IMR-90 (cell line): ENCODE measurements at regions of chr6 and their contacts with region 1.

Region 1: GRCh38 chr6:63571881-63572732 is at the starts of genes LOC128125822 and PTP4A1:
- DNase-seq: peak; percentile 98
- ATAC-seq: peak; percentile 93
- H3K4me3 ChIP-seq: peak within 1 kb of the TSS; percentile 85
- H3K27ac ChIP-seq: peak within 1 kb of the TSS; percentile 99
- H3K4me1 ChIP-seq: no peaks in the 10 kb centered on the region
- H3K27me3 ChIP-seq: no peaks in the 10 kb centered on the region
- CTCF ChIP-seq: 0 out of 2 replicates have a peak, but pooled peaks have one; percentile 22
- POLR2A ChIP-seq: peak; percentile 99
- RAD21 ChIP-seq: no peak
- total RNA-seq, gene PTP4A1: 53.1 and 60.0 TPM in 2 replicates

Region 2: DNA sequence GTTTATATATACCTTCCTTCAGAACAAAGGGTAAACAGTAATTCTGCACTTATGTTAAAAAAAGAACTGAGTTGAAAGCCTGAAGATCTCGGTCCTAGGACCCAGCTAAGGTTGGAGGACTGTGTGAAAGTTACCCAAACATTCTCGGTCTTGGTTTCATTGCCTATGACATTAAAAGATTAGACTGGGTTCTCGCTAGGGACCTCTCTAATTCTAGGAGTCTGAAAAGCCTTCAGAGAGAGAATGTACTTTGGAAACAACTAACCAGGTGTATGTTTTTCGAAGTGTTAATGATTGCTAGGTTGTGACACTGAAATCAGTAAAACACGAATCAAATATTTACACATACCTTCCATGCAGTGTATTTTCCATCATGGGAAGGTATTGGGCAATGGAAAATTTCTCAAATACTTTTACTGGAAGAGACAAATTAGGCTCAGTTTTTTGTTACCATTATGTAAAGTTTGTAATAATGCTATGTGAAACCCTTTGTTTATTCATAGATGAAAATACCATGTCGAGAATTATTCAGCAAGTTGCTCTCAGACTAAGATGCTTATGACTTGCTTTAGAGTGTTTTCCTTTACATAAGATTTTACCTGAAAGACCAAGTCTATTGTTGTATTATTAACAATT is 113.5 kb before region 1 on chr6:
- CTCF ChIA-PET with region 1: no interaction called
- POLR2A ChIA-PET with region 1: no interaction called
- dilution Hi-C with region 1: no loop called
- in situ Hi-C with region 1: no loop called
- intact Hi-C with region 1: loop called (anchors 10 kb)
- DNase-seq: no peak
- ATAC-seq: no peak; the same call in 1 of the 2 replicates
- H3K4me3 ChIP-seq: no peak overlapping the region
- H3K27ac ChIP-seq: no peak overlapping the region
- H3K4me1 ChIP-seq: no peaks in the 10 kb centered on the region
- H3K27me3 ChIP-seq: no peaks in the 10 kb centered on the region
- CTCF ChIP-seq: no peak
- POLR2A ChIP-seq: no peak
- RAD21 ChIP-seq: no peak

Region 3: GRCh38 chr6:63504777-63505384 is 67.2 kb before region 1 on chr6:
- CTCF ChIA-PET with region 1: interaction called, 4 read pairs
- POLR2A ChIA-PET with region 1: no interaction called
- dilution Hi-C with region 1: no loop called
- in situ Hi-C with region 1: no loop called
- intact Hi-C with region 1: loop called (anchors 5 kb)
- DNase-seq: no peak
- ATAC-seq: no peak
- H3K4me3 ChIP-seq: no peak overlapping the region
- H3K27ac ChIP-seq: no peak overlapping the region
- H3K4me1 ChIP-seq: no peaks in the 10 kb centered on the region
- H3K27me3 ChIP-seq: no peaks in the 10 kb centered on the region
- CTCF ChIP-seq: no peak
- POLR2A ChIP-seq: no peak
- RAD21 ChIP-seq: no peak

Region 4: GRCh38 chr6:63527658-63528514 is 44.2 kb before region 1 on chr6:
- CTCF ChIA-PET with region 1: no interaction called
- POLR2A ChIA-PET with region 1: no interaction called
- dilution Hi-C with region 1: no loop called
- in situ Hi-C with region 1: no loop called
- intact Hi-C with region 1: loop called (anchors 5 kb)
- DNase-seq: peak; percentile 100
- ATAC-seq: peak; percentile 95
- H3K4me3 ChIP-seq: no peak overlapping the region
- H3K27ac ChIP-seq: peak overlapping the region; percentile 81; the same call in 1 of the 2 replicates
- H3K4me1 ChIP-seq: peaks cover 10% of the 10 kb centered on the region
- H3K27me3 ChIP-seq: no peaks in the 10 kb centered on the region
- CTCF ChIP-seq: no peak
- POLR2A ChIP-seq: no peak
- RAD21 ChIP-seq: no peak

Region 5: DNA sequence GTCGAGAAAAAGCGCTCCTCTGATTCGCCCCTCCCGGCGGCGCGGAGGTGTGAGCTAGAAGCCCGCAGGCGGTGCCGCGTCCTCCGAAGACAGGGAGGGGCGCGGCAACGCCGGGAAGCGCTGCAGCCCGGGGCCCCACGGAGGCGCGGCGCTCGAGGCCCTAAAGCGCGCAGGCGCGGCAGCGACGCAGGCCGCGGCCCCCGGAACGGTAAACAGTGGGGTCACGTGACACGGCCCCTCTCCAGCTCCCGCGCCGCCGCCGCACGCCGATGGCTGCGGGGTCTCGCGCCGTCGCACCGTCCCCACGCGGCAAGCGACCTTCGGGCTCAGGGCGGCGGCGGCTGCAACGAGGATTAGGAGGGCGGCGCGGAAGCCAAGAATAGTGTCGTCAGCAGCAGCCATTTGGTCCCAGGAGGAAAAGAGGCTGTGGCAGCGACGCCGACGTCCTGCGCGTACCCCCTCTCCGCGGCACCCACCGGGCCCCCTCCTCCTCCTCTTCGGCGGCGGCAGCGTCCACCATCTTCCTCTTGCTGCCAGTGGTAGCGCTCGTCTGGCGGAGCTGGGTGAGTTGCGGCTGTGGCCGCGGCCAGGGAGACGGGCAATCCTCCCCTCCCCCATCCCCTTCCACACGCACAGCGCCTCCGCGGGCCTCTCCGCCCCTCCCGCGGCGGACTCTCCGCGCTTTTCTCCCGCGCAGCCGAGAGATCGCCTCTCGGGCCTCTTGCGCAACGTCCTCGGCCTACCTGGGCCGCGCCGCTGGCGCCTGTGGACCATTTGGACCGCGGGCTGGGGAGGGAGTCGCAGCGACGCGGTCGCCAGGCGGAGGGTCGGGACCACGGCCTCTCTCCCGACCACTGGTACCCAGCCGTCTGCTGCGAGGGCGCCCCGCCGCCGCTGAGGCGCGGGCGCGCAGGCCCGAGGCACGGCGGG is 63.7 kb after region 1 on chr6 and contains the start of gene PHF3:
- CTCF ChIA-PET with region 1: no interaction called
- POLR2A ChIA-PET with region 1: no interaction called
- dilution Hi-C with region 1: no loop called
- in situ Hi-C with region 1: no loop called
- intact Hi-C with region 1: loop called (anchors 2 kb)
- DNase-seq: peak; percentile 84
- ATAC-seq: peak; percentile 92
- H3K4me3 ChIP-seq: peak within 1 kb of the TSS; percentile 95
- H3K27ac ChIP-seq: peak within 1 kb of the TSS; percentile 85
- H3K4me1 ChIP-seq: no peaks in the 10 kb centered on the region; the same call in 1 of the 2 replicates
- H3K27me3 ChIP-seq: peaks cover 3% of the 10 kb centered on the region
- CTCF ChIP-seq: 0 out of 2 replicates have a peak, but pooled peaks have one; percentile 7
- POLR2A ChIP-seq: peak; percentile 78
- RAD21 ChIP-seq: no peak
- total RNA-seq, gene PHF3: 27.8 and 46.9 TPM in 2 replicates

Region 6: GRCh38 chr6:63764318-63764916 is 192.3 kb after region 1 on chr6:
- CTCF ChIA-PET with region 1: no interaction called
- POLR2A ChIA-PET with region 1: no interaction called
- dilution Hi-C with region 1: no loop called
- in situ Hi-C with region 1: no loop called
- intact Hi-C with region 1: loop called (anchors 2 kb)
- DNase-seq: peak; percentile 52
- ATAC-seq: peak; percentile 64
- H3K4me3 ChIP-seq: no peak overlapping the region
- H3K27ac ChIP-seq: no peak overlapping the region
- H3K4me1 ChIP-seq: no peaks in the 10 kb centered on the region
- H3K27me3 ChIP-seq: peaks cover 4% of the 10 kb centered on the region
- CTCF ChIP-seq: peak; percentile 61
- POLR2A ChIP-seq: no peak
- RAD21 ChIP-seq: peak; percentile 59

Region 7: DNA sequence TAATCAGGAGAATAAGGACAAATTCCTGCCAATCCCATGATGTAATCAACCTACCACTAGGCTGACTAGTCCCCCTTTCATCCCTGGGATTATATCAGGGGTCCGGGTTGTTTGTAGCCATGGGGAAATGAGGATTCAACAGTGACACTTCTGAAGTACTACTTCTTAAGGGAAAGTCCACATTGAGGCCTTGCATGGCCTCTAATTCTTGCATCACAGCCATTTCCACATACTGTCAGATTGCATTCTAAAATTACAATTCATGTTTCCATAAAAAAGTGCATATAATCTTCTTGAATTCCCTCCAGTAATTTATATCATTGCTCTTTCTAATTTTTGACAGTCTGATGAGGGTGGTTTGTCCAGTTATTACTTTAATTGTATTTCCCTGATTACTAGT is 247.7 kb after region 1 on chr6:
- CTCF ChIA-PET with region 1: no interaction called
- POLR2A ChIA-PET with region 1: no interaction called
- dilution Hi-C with region 1: no loop called
- in situ Hi-C with region 1: no loop called
- intact Hi-C with region 1: no loop called
- DNase-seq: peak; percentile 25
- ATAC-seq: no peak
- H3K4me3 ChIP-seq: no peak overlapping the region
- H3K27ac ChIP-seq: no peak overlapping the region
- H3K4me1 ChIP-seq: peaks cover 9% of the 10 kb centered on the region
- H3K27me3 ChIP-seq: no peaks in the 10 kb centered on the region
- CTCF ChIP-seq: no peak
- POLR2A ChIP-seq: no peak
- RAD21 ChIP-seq: no peak